HCT116 (cell line): ENCODE measurements at regions of chr17 and their contacts with region 1.

Region 1: DNA sequence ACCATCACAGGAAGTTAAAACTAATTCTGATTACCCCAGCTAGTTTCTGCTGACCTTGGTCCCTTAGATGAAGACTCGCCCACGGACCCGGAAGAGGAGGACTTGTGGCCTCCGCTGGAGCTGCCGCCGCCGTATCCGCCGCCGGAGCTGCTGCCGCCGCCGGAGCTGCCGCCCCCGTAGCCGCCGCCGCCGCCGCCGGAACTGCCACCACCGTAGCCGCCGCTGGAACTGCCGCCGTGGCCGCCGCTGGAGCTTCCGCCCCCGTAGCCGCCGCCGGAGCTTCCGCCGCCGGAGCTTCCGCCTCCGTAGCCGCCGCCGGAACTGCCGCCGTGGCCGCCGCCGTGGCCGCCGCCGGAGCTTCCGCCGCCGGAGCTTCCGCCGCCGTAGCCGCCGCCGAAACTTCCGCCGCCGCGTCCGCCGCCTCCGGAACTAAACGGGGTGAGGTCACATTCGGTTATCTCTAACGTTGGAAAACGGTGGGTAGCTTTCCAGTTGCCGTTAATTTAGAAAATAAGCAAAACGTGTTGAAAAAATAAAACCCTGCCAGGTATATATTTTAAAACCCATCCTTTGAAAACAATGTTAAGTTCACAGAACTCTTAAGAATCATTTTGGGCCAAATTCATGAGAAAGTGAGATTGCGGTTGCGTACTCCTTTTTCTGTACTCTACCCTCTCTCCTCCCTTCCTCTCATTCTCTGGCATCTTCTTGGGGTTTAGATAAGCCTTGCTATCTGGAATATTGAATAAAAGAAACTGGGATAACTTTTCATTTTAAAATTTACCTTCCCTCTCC is 3.5 kb downstream of the KRT10 start:
- DNase-seq: peak; percentile 53
- ATAC-seq: peak; percentile 89
- H3K4me3 ChIP-seq: peak overlapping the region; percentile 69 to 88
- H3K27ac ChIP-seq: peak overlapping the region; percentile 93
- H3K4me1 ChIP-seq: peaks cover 8 to 19% of the 10 kb centered on the region in 2 experiments
- H3K27me3 ChIP-seq: no peaks in the 10 kb centered on the region
- CTCF ChIP-seq: no peak
- POLR2A ChIP-seq: no peak
- RAD21 ChIP-seq: no peak

Region 2: DNA sequence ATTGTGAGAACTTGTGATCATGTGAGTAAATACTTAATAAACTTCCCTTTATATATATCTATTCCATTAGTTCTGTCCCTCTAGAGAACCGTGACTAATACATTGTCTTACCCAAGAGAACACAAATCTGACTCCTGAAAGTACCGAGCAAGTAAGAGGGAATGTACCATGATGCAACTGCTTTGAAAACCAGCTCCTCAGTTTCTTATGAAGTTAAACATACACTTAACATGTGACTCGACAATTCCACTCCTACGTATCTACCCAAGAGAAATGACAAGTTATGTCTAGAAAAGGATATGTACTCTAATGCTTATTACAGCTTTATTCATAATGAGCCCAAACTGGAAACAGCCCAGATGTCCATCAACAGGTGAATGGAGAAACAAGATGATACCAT is 445.6 kb before region 1 on chr17:
- CTCF ChIA-PET with region 1: no interaction called
- POLR2A ChIA-PET with region 1: no interaction called
- RAD21 ChIA-PET with region 1: no interaction called
- intact Hi-C with region 1: no loop called
- DNase-seq: no peak
- ATAC-seq: no peak
- H3K4me3 ChIP-seq: no peak overlapping the region
- H3K27ac ChIP-seq: no peak overlapping the region
- H3K4me1 ChIP-seq: no peaks in the 10 kb centered on the region
- H3K27me3 ChIP-seq: no peaks in the 10 kb centered on the region
- CTCF ChIP-seq: no peak
- POLR2A ChIP-seq: no peak
- RAD21 ChIP-seq: no peak

Region 3: DNA sequence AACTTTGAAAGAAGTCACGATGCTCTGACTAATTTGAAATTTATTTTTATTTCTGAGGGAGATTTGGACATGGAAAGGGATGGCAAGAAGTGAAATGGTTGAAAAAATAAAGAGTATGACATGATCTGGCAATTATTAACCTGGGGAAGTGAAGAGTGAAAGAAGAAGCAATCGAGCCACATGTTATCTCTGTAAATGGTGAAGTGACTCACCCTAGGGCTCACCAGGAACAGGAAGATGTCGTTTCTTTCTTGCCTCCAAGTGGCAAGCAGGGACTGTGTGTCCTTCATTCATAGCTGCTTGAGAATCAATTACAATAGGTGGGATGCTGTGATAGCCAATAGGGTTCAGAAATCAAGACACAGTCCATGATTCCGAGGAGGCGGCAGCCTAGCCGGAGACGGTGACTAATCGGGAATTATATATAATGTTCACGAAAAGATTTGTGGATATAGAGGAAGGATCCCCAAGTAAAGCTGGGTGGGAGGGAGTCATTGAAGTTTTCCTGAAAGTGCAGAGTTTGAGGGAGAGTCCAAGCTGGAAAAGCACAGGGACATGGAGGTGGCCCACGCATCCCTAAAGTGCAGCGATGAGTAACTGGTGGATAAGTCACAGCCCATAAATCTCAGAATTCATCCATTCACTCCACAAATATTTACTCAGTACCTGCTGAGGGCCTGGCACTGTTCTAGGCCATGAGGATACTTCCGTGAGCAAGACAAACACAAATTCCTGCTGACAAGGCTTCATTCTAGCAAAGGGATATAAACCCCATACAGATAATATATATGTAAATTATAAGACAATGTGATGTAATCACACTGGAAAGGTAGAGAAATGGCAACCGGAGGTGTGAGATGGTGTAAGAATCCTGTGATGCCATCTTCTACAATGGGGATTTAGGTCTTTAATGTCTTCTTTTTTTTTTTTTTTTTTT is 84.5 kb after region 1 on chr17:
- CTCF ChIA-PET with region 1: no interaction called
- POLR2A ChIA-PET with region 1: interaction called, 3 read pairs
- RAD21 ChIA-PET with region 1: no interaction called
- intact Hi-C with region 1: loop called (anchors 5 kb)
- DNase-seq: peak; percentile 90
- ATAC-seq: peak; percentile 87
- H3K4me3 ChIP-seq: peak overlapping the region; percentile 12 to 33
- H3K27ac ChIP-seq: peak overlapping the region; percentile 96
- H3K4me1 ChIP-seq: peaks cover 48 to 56% of the 10 kb centered on the region in 2 experiments
- H3K27me3 ChIP-seq: no peaks in the 10 kb centered on the region
- CTCF ChIP-seq: no peak
- POLR2A ChIP-seq: no peak
- RAD21 ChIP-seq: peak; percentile 6; the same call in 1 of the 2 replicates

Region 4: DNA sequence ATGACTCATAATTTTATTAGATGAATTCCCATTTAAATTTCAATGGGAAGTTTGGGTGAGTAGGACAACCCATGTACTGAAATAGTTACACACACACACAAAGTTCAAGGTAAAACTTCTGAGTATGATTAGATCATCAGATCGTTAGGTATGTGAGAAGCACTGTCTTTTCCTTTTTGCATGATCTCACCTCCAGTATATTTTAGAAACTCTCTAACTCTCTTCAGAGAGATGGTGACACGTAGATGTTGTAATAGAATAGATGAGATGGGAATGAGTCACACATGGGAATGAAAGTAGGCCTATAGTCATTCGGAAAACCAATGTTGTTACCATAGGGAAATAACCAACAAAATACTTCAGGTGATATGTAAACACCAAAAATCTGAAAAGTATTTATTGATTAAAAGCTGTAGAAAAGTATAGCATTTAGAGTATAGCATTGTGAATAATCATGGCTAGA is 96.3 kb after region 1 on chr17:
- CTCF ChIA-PET with region 1: no interaction called
- POLR2A ChIA-PET with region 1: no interaction called
- RAD21 ChIA-PET with region 1: no interaction called
- intact Hi-C with region 1: no loop called
- DNase-seq: peak; percentile 92
- ATAC-seq: peak; percentile 83
- H3K4me3 ChIP-seq: no peak overlapping the region
- H3K27ac ChIP-seq: peak overlapping the region; percentile 90
- H3K4me1 ChIP-seq: peaks cover 50 to 65% of the 10 kb centered on the region in 2 experiments
- H3K27me3 ChIP-seq: no peaks in the 10 kb centered on the region
- CTCF ChIP-seq: no peak
- POLR2A ChIP-seq: no peak
- RAD21 ChIP-seq: peak; percentile 46